ENCODE measurements at regions of chr13 and their contacts with region 1.

Region 1: DNA sequence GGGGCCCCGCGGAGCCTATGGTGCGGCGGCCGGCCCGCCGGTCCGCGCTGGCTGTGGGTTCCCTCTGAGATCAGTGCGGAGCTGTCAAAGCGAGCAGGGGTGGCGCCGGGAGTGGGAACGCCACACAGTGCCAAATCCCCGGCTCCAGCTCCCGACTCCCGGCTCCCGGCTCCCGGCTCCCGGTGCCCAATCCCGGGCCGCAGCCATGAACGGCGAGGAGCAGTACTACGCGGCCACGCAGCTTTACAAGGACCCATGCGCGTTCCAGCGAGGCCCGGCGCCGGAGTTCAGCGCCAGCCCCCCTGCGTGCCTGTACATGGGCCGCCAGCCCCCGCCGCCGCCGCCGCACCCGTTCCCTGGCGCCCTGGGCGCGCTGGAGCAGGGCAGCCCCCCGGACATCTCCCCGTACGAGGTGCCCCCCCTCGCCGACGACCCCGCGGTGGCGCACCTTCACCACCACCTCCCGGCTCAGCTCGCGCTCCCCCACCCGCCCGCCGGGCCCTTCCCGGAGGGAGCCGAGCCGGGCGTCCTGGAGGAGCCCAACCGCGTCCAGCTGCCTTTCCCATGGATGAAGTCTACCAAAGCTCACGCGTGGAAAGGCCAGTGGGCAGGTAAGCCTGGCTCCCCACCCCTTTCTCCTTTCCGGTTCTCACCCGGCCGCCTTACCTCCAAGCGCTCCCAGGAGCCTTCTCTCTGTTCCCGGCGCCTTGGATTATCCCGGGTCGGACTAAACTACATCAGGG is at the start of gene PDX1:
- DNase-seq: peak; percentile 86 to 89
- H3K4me3 ChIP-seq: peak within 1 kb of the TSS; percentile 83
- H3K4me3 Mint-ChIP-seq: peak within 1 kb of the TSS; percentile 96
- H3K27ac Mint-ChIP-seq: peak within 1 kb of the TSS; percentile 68
- H3K4me1 ChIP-seq: peaks cover 25% of the 10 kb centered on the region
- H3K4me1 Mint-ChIP-seq: peaks cover 8% of the 10 kb centered on the region
- H3K27me3 ChIP-seq: no peaks in the 10 kb centered on the region
- H3K27me3 Mint-ChIP-seq: no peaks in the 10 kb centered on the region
- CTCF ChIP-seq: no peak
- total RNA-seq, gene PDX1: 3.7 and 3.9 TPM in 2 replicates

Region 2: DNA sequence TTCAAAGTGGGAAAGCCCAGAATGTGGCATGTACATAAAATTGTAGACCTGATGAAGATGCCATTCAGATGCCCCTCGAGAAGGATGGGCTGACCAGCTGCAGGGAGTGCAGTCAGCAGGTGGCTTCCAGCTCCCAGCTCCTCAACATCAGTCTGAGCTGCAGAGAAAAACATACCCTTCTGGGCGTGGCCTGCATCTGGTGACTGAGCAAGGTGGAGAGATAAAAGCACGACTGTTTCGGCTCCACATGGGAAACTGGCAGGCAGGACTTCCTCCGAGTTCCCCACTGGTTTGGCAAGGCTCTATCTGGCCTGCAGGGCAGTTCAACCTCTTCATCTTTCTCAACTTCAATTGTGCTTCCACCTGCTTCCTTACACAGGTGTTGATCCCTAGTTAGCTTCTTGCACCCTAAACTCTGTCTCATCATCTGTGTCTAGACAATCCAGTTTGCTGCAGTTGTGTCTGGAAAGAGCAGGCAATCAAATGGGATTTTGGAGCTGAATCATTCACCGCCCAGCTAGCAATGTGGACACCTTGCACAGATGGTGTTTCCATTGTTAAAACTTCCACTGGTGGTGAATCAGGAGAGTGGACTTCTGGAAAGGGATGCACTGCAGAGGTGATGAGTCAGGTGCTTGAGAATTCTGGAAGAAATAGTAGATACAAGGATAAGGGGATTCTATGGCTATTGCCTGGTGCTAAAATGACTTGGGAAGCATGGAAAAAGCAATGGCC is 241.6 kb before region 1 on chr13:
- CTCF ChIA-PET with region 1: no interaction called
- POLR2A ChIA-PET with region 1: no interaction called
- intact Hi-C with region 1: no loop called
- DNase-seq: no peak
- H3K4me3 ChIP-seq: no peak overlapping the region
- H3K4me3 Mint-ChIP-seq: no peak overlapping the region
- H3K27ac Mint-ChIP-seq: no peak overlapping the region
- H3K4me1 ChIP-seq: no peaks in the 10 kb centered on the region
- H3K4me1 Mint-ChIP-seq: no peaks in the 10 kb centered on the region
- H3K27me3 ChIP-seq: no peaks in the 10 kb centered on the region
- H3K27me3 Mint-ChIP-seq: peaks cover 9% of the 10 kb centered on the region
- CTCF ChIP-seq: no peak

Region 3: DNA sequence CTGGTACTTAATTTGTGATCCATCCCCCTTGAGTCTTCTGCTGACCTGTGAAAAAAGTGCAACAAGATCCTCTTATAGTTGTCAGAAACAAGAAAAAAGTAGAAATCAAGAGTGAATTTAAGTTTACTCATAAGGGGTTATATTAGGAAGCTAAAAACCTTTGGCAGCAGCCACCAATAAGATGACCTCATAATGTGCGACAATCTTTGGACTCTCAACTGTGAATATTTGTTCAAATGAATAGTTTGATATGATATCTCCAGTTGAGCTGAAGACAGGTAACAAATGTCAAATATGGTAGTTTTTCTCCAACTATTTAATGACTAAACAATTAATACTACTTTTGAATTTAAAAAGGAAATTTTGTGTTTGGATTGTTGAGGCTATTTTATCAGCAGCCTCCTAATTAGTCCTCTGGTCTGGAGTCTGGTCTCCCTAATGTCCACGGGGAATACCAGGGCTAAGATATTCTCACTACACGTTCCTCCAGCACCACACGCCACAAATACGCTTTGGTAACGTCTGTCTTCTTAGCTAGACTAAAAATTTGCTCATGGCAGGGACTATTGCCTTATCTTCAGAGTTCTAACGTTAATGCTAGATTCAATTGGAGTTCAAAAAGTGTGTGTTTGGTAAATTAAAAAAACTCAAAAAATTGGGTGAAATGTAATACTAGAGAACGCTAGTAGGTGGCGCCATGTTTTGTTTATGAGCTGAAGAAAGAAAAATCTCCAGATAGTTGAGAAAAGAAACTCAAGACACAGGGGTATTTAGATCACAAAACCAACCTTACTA is 51.3 kb before region 1 on chr13:
- CTCF ChIA-PET with region 1: interaction called, 8 read pairs
- POLR2A ChIA-PET with region 1: interaction called, 4 read pairs
- intact Hi-C with region 1: loop called (anchors 2 kb)
- DNase-seq: no peak
- H3K4me3 ChIP-seq: peak overlapping the region; percentile 15; the same call in 1 of the 2 replicates
- H3K4me3 Mint-ChIP-seq: peak overlapping the region; percentile 57
- H3K27ac Mint-ChIP-seq: peak overlapping the region; percentile 86
- H3K4me1 ChIP-seq: peaks cover 35% of the 10 kb centered on the region
- H3K4me1 Mint-ChIP-seq: peaks cover 24% of the 10 kb centered on the region
- H3K27me3 ChIP-seq: no peaks in the 10 kb centered on the region
- H3K27me3 Mint-ChIP-seq: no peaks in the 10 kb centered on the region
- CTCF ChIP-seq: peak; percentile 53 to 62

Measured in Caco-2 (cell line).